ENCODE measurements at regions of chrX and their contacts with region 1.

Region 1: GRCh38 chrX:107716816-107717700 is 58.5 kb downstream of the TSC22D3 start:
- DNase-seq: peak; percentile 83 to 96 (median 87)
- ATAC-seq: peak; percentile 54
- H3K4me3 ChIP-seq: peak overlapping the region; percentile 98
- H3K4me3 Mint-ChIP-seq: peak overlapping the region; percentile 97
- H3K27ac ChIP-seq: peak overlapping the region; percentile 91 to 99
- H3K27ac Mint-ChIP-seq: peak overlapping the region; percentile 99
- H3K4me1 ChIP-seq: peaks cover 52% of the 10 kb centered on the region
- H3K4me1 Mint-ChIP-seq: peaks cover 50% of the 10 kb centered on the region
- H3K27me3 ChIP-seq: no peaks in the 10 kb centered on the region
- H3K27me3 Mint-ChIP-seq: peaks cover 4% of the 10 kb centered on the region
- CTCF ChIP-seq: no peak

Region 2: DNA sequence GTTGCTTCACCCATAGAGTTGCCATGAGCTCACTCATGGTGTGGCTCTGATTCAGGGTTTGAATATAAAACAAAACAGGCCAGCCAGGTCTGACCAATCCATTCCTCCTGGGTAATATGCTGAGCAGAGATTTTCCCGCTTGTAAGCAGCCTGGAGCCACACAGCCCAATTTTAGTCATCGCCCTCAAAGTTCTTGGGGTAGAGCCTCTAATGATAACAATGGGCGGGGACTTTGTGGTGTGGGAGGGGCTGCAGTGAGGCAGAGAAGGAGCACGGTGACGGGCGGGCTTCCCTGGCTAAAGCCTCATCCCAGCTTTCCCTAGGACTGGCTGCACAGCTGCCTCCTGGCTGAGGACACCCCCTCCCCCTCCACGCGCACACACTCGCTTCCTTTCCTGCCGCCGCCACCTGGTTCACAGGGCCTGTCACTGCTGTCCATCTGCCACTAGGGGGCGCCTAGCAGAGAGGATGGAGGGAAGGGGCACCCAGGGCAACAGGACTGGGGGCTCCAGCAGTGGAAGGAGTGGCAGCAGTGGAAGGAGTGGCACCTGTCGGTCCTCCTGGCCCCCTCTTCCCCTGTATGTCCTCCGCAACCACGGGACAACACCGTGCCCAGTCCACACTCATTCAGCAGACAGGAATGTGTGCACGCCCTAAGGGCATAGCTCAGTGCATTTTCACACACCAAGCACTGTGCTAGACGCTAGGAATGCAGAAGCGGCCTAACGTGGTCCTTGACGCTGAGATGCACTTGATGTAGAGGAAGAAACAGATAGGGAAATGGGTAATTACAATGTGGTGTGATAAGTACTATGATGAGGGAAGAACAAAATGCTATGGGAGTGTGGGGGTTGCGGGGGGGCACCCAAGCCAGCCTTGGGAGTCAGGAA is 61.9 kb before region 1 on chrX:
- CTCF ChIA-PET with region 1: interaction called, 9 read pairs
- POLR2A ChIA-PET with region 1: interaction called, 16 read pairs
- intact Hi-C with region 1: loop called in 1 of 2 experiments (anchors 5 kb)
- DNase-seq: peak; percentile 49 to 81 (median 64)
- ATAC-seq: peak; percentile 92
- H3K4me3 ChIP-seq: no peak overlapping the region
- H3K4me3 Mint-ChIP-seq: no peak overlapping the region
- H3K27ac ChIP-seq: no peak overlapping the region
- H3K27ac Mint-ChIP-seq: peak overlapping the region; percentile 13
- H3K4me1 ChIP-seq: peaks cover 12% of the 10 kb centered on the region
- H3K4me1 Mint-ChIP-seq: peaks cover 29% of the 10 kb centered on the region
- H3K27me3 ChIP-seq: no peaks in the 10 kb centered on the region
- H3K27me3 Mint-ChIP-seq: no peaks in the 10 kb centered on the region
- CTCF ChIP-seq: peak; percentile 72

Region 3: DNA sequence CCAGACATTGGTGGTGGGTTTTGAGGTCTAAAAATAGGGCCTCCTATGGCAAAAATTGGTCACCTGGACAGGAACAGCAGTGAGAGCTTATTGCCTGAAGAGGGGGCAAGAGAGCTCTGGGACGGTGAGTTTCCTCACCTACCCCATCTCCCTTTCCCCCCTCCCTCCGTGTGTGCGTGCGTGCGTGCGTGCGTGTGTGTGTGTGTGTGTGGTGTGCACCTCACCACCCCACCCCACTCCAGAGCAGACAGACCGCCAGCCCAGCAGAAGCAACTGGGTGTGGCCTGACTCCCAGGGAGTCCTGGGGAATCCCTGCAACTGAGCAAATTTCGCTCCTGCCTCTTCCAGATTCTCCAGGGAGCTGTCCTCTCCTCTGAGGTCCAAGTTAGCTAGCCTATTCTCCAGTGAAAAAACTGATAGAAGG is 44.1 kb before region 1 on chrX:
- CTCF ChIA-PET with region 1: interaction called, 261 read pairs
- POLR2A ChIA-PET with region 1: interaction called, 754 read pairs
- intact Hi-C with region 1: loop called (anchors 1 kb)
- DNase-seq: peak; percentile 67 to 94 (median 78)
- ATAC-seq: peak; percentile 45
- H3K4me3 ChIP-seq: peak overlapping the region; percentile 33
- H3K4me3 Mint-ChIP-seq: peak overlapping the region; percentile 87
- H3K27ac ChIP-seq: peak overlapping the region; percentile 97 to 98
- H3K27ac Mint-ChIP-seq: peak overlapping the region; percentile 99
- H3K4me1 ChIP-seq: peaks cover 59% of the 10 kb centered on the region
- H3K4me1 Mint-ChIP-seq: peaks cover 51% of the 10 kb centered on the region
- H3K27me3 ChIP-seq: no peaks in the 10 kb centered on the region
- H3K27me3 Mint-ChIP-seq: no peaks in the 10 kb centered on the region
- CTCF ChIP-seq: peak; percentile 58

Region 4: GRCh38 chrX:107686792-107687191 is 30.3 kb before region 1 on chrX:
- CTCF ChIA-PET with region 1: no interaction called
- POLR2A ChIA-PET with region 1: interaction called, 754 read pairs
- intact Hi-C with region 1: no loop called
- DNase-seq: peak in 2 of 14 experiments; percentile 25 to 41
- ATAC-seq: no peak
- H3K4me3 ChIP-seq: no peak overlapping the region
- H3K4me3 Mint-ChIP-seq: no peak overlapping the region
- H3K27ac ChIP-seq: no peak overlapping the region
- H3K27ac Mint-ChIP-seq: no peak overlapping the region
- H3K4me1 ChIP-seq: peaks cover 47% of the 10 kb centered on the region
- H3K4me1 Mint-ChIP-seq: peaks cover 40% of the 10 kb centered on the region
- H3K27me3 ChIP-seq: no peaks in the 10 kb centered on the region
- H3K27me3 Mint-ChIP-seq: no peaks in the 10 kb centered on the region
- CTCF ChIP-seq: no peak

Region 5: DNA sequence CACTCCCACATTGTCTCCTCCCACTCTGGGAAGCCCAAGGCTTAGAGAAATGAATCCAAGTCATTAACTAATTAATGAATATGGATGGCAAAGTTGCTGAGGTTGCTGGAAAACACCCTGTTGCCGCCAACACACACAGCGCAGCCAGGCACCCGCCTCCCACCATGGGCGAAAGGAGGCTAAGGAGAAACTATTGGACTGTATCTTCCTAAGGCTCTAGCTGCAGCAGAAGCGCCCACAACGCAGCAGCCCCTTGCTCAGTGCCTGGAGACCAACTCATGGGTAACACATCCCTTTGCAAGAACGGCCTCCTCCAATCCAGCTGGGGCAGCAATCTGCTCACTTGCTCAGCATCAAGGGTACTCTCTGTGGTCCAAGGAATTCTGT is 24.3 kb after region 1 on chrX:
- CTCF ChIA-PET with region 1: interaction called, 4 read pairs
- POLR2A ChIA-PET with region 1: interaction called, 76 read pairs
- intact Hi-C with region 1: loop called (anchors 1 to 2 kb)
- DNase-seq: peak in 2 of 14 experiments; percentile 3 to 5
- ATAC-seq: peak; percentile 10
- H3K4me3 ChIP-seq: peak overlapping the region; percentile 17
- H3K4me3 Mint-ChIP-seq: peak overlapping the region; percentile 88
- H3K27ac ChIP-seq: peak overlapping the region; percentile 46 to 82
- H3K27ac Mint-ChIP-seq: peak overlapping the region; percentile 98
- H3K4me1 ChIP-seq: peaks cover 61% of the 10 kb centered on the region
- H3K4me1 Mint-ChIP-seq: peaks cover 47% of the 10 kb centered on the region
- H3K27me3 ChIP-seq: no peaks in the 10 kb centered on the region
- H3K27me3 Mint-ChIP-seq: peaks cover 7% of the 10 kb centered on the region
- CTCF ChIP-seq: no peak

Measured in CD4-positive, alpha-beta T cell (primary cell).